MCF 10A (cell line): ENCODE measurements at regions of chr1 and their contacts with region 1.

Region 1: GRCh38 chr1:185813401-185813979 is 79.3 kb downstream of the HMCN1 start:
- DNase-seq: peak; percentile 80
- H3K4me3 Mint-ChIP-seq: no peak overlapping the region
- H3K27ac Mint-ChIP-seq: no peak overlapping the region
- H3K4me1 Mint-ChIP-seq: no peaks in the 10 kb centered on the region
- H3K27me3 Mint-ChIP-seq: no peaks in the 10 kb centered on the region
- CTCF ChIP-seq: peak; percentile 68

Region 2: DNA sequence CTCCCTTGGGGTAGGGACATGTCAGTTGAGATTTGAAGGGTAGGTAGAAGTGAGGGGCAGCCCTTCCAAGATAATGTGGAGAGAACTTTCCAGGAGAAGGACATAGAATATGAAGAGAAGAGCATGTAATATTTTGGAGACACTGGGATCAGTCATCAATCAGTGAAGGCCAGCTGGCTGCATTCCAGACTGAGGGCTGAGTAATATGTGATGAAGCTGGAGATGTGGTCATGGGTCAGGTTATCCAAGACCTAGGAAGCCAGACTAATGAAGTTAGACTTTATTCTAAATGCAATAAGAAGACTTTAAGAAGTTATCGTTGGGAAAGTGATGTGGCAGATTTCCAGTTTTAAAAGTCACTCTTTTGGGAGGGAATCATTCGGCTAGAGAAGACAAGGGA is 182.7 kb after region 1 on chr1:
- CTCF ChIA-PET with region 1: no interaction called
- POLR2A ChIA-PET with region 1: no interaction called
- intact Hi-C with region 1: loop called (anchors 10 kb)
- DNase-seq: peak; percentile 96
- H3K4me3 Mint-ChIP-seq: no peak overlapping the region
- H3K27ac Mint-ChIP-seq: no peak overlapping the region
- H3K4me1 Mint-ChIP-seq: peaks cover 10% of the 10 kb centered on the region
- H3K27me3 Mint-ChIP-seq: no peaks in the 10 kb centered on the region
- CTCF ChIP-seq: no peak

Region 3: GRCh38 chr1:186304982-186305949 is 491.8 kb after region 1 on chr1:
- CTCF ChIA-PET with region 1: no interaction called
- POLR2A ChIA-PET with region 1: no interaction called
- intact Hi-C with region 1: loop called (anchors 10 kb)
- DNase-seq: peak; percentile 60
- H3K4me3 Mint-ChIP-seq: no peak overlapping the region
- H3K27ac Mint-ChIP-seq: no peak overlapping the region
- H3K4me1 Mint-ChIP-seq: no peaks in the 10 kb centered on the region
- H3K27me3 Mint-ChIP-seq: no peaks in the 10 kb centered on the region
- CTCF ChIP-seq: peak; percentile 61